Activated CD8-positive, alpha-beta T cell treated with anti-CD3 and anti-CD28 coated beads, Interleukin-2, amount 10 ng/mL, durations not matched to agents 7 days and 5 days (primary cell): ENCODE measurements at regions of chr1 and their contacts with region 1.

Region 1: GRCh38 chr1:115980998-115981993 is 5.0 kb downstream of the SLC22A15 start:
- DNase-seq: peak; percentile 36
- ATAC-seq: peak; percentile 43
- H3K4me3 Mint-ChIP-seq: no peak overlapping the region
- H3K27ac Mint-ChIP-seq: no peak overlapping the region
- H3K4me1 Mint-ChIP-seq: no peaks in the 10 kb centered on the region
- H3K27me3 Mint-ChIP-seq: peaks cover 35% of the 10 kb centered on the region

Region 2: DNA sequence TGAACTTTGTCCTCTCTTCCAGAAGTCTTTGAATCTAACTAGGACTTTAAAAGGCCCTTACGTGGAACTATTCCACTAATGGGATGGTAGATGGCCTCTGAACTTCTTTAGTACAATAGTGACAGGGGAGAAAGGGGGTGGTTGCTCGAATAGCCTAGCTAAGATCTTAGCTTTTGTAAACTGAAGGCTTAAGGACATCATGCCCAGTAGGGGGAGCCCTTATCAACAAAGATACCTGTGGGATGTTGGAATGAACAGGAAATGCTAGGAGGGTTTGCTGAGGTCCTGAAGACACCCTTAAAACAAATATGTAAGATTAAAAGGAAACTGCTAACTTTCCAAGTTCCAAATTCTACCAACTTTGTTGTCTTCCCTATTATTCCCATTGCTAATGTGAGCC is 173.6 kb before region 1 on chr1:
- CTCF ChIA-PET with region 1: interaction called, 27 read pairs
- POLR2A ChIA-PET with region 1: no interaction called
- DNase-seq: peak; percentile 70
- ATAC-seq: peak; percentile 49
- H3K4me3 Mint-ChIP-seq: no peak overlapping the region
- H3K27ac Mint-ChIP-seq: no peak overlapping the region
- H3K4me1 Mint-ChIP-seq: no peaks in the 10 kb centered on the region
- H3K27me3 Mint-ChIP-seq: peaks cover 13% of the 10 kb centered on the region

Region 3: GRCh38 chr1:115991909-115992308 is 10.6 kb after region 1 on chr1:
- CTCF ChIA-PET with region 1: interaction called, 26 read pairs
- POLR2A ChIA-PET with region 1: no interaction called
- DNase-seq: no peak
- ATAC-seq: no peak
- H3K4me3 Mint-ChIP-seq: no peak overlapping the region
- H3K27ac Mint-ChIP-seq: no peak overlapping the region
- H3K4me1 Mint-ChIP-seq: no peaks in the 10 kb centered on the region
- H3K27me3 Mint-ChIP-seq: peaks cover 2% of the 10 kb centered on the region